Activated CD4-positive, alpha-beta memory T cell treated with anti-CD3 and anti-CD28 coated beads for 36 hours (primary cell): ENCODE measurements at regions of chr1 and their contacts with region 1.

Region 1: DNA sequence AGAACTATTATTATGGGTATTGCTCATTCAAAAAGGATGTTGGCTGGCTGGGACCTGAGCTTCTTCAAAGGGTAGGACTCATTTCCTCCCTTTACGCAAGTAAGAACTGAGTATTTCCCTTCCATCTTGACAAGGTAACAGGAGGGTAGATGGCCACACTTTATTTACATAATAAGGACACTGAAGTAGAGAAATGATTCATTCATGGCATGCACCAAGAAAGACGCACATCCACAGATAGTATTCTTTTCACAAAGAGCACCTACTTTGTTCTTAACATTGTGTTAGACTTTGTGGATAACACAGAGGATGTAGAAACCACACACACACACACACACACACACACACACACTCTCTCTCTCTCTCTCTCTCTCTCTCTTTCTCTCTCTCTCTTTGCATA is 82.9 kb downstream of the FAM78B start:
- DNase-seq: peak; percentile 41
- H3K4me3 Mint-ChIP-seq: no peak overlapping the region
- H3K27ac Mint-ChIP-seq: peak overlapping the region; percentile 29
- H3K4me1 Mint-ChIP-seq: peaks cover 40% of the 10 kb centered on the region
- H3K27me3 Mint-ChIP-seq: no peaks in the 10 kb centered on the region

Region 2: GRCh38 chr1:165686121-165686970 is 397.5 kb before region 1 on chr1:
- CTCF ChIA-PET with region 1: no interaction called
- POLR2A ChIA-PET with region 1: no interaction called
- intact Hi-C with region 1: loop called (anchors 5 kb)
- DNase-seq: no peak
- H3K4me3 Mint-ChIP-seq: no peak overlapping the region
- H3K27ac Mint-ChIP-seq: peak overlapping the region; percentile 71
- H3K4me1 Mint-ChIP-seq: peaks cover 41% of the 10 kb centered on the region
- H3K27me3 Mint-ChIP-seq: no peaks in the 10 kb centered on the region

Region 3: GRCh38 chr1:166166695-166167571 is 83.0 kb after region 1 on chr1 and contains the start of gene FAM78B:
- CTCF ChIA-PET with region 1: no interaction called
- POLR2A ChIA-PET with region 1: interaction called, 4 read pairs
- intact Hi-C with region 1: loop called (anchors 2 kb)
- DNase-seq: peak; percentile 72
- H3K4me3 Mint-ChIP-seq: peak within 1 kb of the TSS; percentile 67
- H3K27ac Mint-ChIP-seq: no peak within 1 kb of the TSS
- H3K4me1 Mint-ChIP-seq: peaks cover 23% of the 10 kb centered on the region
- H3K27me3 Mint-ChIP-seq: peaks cover 33% of the 10 kb centered on the region
- total RNA-seq, gene FAM78B: 0.24 to 0.27 TPM

Region 4: DNA sequence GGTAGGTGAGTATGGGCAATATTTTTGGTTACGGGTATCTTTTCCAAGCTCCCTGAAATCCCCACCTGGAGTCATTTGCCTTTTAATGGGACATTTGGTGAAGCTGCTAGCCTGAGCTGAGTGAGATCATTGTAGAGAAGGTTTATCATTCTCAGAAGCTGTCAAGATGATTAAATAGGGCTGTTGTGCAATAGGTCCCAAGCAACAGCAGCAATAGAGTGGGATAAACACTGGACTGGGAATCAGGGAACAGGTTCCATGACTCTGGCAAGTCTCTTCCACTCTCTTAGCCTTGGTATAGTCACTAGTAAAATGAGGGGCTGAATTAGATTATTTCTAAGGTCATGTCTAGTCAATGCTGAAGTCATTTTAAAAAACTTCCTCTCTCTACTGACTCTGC is 113.3 kb after region 1 on chr1:
- CTCF ChIA-PET with region 1: no interaction called
- POLR2A ChIA-PET with region 1: no interaction called
- intact Hi-C with region 1: no loop called
- DNase-seq: no peak
- H3K4me3 Mint-ChIP-seq: no peak overlapping the region
- H3K27ac Mint-ChIP-seq: no peak overlapping the region
- H3K4me1 Mint-ChIP-seq: no peaks in the 10 kb centered on the region
- H3K27me3 Mint-ChIP-seq: peaks cover 5% of the 10 kb centered on the region